ENCODE measurements at regions of chr16 and their contacts with region 1.

Region 1: DNA sequence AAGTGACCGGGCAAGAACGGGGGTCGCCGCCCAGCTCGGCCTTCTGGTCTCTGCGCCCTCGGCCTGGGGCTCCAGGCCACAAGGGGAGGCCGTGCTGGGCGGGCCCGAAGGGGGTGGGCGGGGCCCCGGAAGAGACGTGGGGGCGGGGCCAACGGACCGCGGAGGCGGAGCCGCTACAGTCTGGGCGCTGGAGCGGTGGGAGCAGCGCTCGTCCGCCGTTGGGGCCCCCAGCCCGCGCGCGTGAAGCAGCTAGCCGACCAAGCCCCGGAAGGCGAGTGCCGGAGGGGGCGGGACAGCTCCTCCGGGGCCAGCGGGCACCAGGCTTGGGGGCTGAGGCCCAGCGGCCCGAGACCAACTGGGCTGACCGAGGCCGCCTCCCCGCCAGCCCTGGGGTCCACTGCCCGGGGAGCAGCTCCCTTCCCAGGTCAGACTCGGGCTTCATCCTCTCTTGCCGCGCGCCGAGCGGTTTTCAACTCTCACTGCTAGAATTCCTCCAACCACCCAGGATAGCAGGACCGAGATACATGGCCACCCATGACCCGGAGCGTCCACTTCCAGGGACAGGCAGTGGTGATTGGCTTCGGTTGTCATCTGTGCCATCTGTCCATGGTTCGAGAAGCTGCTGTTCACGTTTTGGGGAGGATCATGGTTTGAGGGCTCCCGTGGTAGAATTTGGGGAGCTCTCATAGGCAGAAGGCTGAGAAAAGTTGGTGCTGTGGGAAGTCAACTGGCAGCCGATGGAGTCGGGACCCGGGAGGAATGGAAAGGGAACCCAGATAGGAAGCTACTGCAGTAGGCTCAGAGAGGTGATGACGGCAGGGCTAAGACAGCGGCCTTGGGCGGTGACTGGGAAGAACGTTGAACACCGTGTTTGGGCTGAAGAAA is 44.6 kb upstream of the LCMT1 start:
- DNase-seq: peak; percentile 38 to 81
- H3K4me3 ChIP-seq: peak overlapping the region; percentile 97
- H3K27ac ChIP-seq: no peak overlapping the region
- H3K4me1 ChIP-seq: 0 out of 2 replicates have a peak, but pooled peaks cover 7% of the 10 kb centered on the region
- H3K27me3 ChIP-seq: no peaks in the 10 kb centered on the region
- CTCF ChIP-seq: no peak

Region 2: DNA sequence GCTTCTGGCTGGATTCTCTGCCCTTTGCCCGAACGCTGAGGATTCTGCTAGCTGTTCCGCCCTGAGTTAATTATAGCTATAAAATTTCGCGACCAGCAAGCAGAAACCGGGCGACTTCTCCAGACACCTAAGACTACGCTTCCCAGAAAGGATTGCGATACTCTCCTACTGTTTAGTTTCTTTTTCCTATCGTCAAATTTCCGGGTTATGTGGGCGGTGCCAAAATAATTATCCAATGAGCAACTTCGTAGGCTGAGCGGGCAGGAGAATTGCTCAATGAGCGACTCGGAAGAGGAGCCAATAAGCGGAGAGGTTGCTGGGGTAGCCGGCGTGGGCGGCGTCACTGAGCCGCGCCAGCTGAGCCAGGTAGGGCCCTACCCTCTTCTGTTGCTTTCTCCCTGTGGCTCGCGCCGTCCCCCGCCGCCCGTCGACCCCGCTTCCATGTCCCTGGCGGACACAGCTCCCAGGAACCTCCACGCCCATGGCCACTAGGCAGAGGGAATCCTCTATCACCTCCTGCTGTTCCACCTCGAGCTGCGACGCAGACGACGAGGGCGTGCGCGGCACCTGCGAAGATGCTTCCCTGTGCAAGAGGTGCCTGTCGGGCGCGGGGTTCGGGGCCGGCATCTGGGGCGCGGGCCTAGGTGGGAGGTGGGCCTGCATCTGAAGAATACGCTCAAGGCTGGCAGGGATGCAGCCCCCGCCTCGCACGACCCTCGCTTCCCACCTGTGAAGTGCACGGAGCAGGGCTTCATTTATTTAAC is 44.6 kb after region 1 on chr16 and contains the start of gene LCMT1:
- CTCF ChIA-PET with region 1: no interaction called
- POLR2A ChIA-PET with region 1: interaction called, 6 read pairs
- intact Hi-C with region 1: loop called (anchors 2 kb)
- DNase-seq: peak; percentile 92 to 96
- H3K4me3 ChIP-seq: peak within 1 kb of the TSS; percentile 74
- H3K27ac ChIP-seq: peak within 1 kb of the TSS; percentile 82
- H3K4me1 ChIP-seq: peaks cover 29% of the 10 kb centered on the region
- H3K27me3 ChIP-seq: no peaks in the 10 kb centered on the region
- CTCF ChIP-seq: no peak
- total RNA-seq, gene LCMT1: 67.1 and 113 TPM in 2 replicates

Region 3: GRCh38 chr16:25126820-25127232 is 59.8 kb after region 1 on chr16:
- CTCF ChIA-PET with region 1: no interaction called
- POLR2A ChIA-PET with region 1: interaction called, 22 read pairs
- intact Hi-C with region 1: no loop called
- DNase-seq: peak; percentile 67 to 81
- H3K4me3 ChIP-seq: no peak overlapping the region
- H3K27ac ChIP-seq: no peak overlapping the region
- H3K4me1 ChIP-seq: peaks cover 9% of the 10 kb centered on the region; the same call in 1 of the 2 replicates
- H3K27me3 ChIP-seq: no peaks in the 10 kb centered on the region
- CTCF ChIP-seq: peak; percentile 77

Region 4: DNA sequence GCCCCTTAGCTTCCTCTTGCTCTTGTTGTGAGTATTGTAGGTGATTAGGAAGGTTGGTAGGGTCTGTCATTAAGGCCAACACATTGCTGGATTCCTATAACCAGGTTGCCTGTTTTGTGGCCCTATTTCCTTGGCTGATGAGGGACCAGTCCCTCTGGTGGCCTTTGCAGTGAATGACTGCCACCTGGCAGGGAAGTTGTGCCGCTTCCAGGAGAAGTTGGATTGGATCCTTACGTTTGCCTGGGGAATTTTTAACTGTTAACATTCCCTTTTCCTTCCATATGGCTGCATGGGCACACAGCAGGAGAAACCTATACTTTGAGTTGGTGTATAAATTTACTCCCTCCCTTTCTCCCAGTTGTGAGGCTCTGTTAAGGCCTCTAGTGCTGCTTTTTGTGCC is 76.9 kb after region 1 on chr16:
- CTCF ChIA-PET with region 1: no interaction called
- POLR2A ChIA-PET with region 1: no interaction called
- intact Hi-C with region 1: no loop called
- DNase-seq: no peak
- H3K4me3 ChIP-seq: no peak overlapping the region
- H3K27ac ChIP-seq: no peak overlapping the region
- H3K4me1 ChIP-seq: no peaks in the 10 kb centered on the region
- H3K27me3 ChIP-seq: no peaks in the 10 kb centered on the region
- CTCF ChIP-seq: peak; percentile 47

Region 5: GRCh38 chr16:25257504-25257955 is 190.5 kb after region 1 on chr16 and contains the start of gene ZKSCAN2:
- CTCF ChIA-PET with region 1: no interaction called
- POLR2A ChIA-PET with region 1: no interaction called
- intact Hi-C with region 1: loop called (anchors 10 kb)
- DNase-seq: peak; percentile 72 to 94
- H3K4me3 ChIP-seq: peak within 1 kb of the TSS; percentile 89
- H3K27ac ChIP-seq: peak within 1 kb of the TSS; percentile 96
- H3K4me1 ChIP-seq: peaks cover 21% of the 10 kb centered on the region
- H3K27me3 ChIP-seq: no peaks in the 10 kb centered on the region
- CTCF ChIP-seq: no peak
- total RNA-seq, gene ZKSCAN2: 4.5 and 6.5 TPM in 2 replicates